ENCODE measurements at regions of chr10 and their contacts with region 1.

Region 1: GRCh38 chr10:124647421-124648130 is 96.6 kb downstream of the FAM53B start:
- DNase-seq: no peak
- H3K4me3 ChIP-seq: no peak overlapping the region
- H3K27ac ChIP-seq: peak overlapping the region; percentile 39 to 76 (median 72)
- H3K4me1 ChIP-seq: peaks cover 72 to 97% (median 91%) of the 10 kb centered on the region in 4 donors
- H3K27me3 ChIP-seq: no peaks in the 10 kb centered on the region
- CTCF ChIP-seq: peak in 2 of 3 experiments; percentile 5 to 26
- EP300 ChIP-seq: no peak
- POLR2A ChIP-seq: no peak

Region 2: DNA sequence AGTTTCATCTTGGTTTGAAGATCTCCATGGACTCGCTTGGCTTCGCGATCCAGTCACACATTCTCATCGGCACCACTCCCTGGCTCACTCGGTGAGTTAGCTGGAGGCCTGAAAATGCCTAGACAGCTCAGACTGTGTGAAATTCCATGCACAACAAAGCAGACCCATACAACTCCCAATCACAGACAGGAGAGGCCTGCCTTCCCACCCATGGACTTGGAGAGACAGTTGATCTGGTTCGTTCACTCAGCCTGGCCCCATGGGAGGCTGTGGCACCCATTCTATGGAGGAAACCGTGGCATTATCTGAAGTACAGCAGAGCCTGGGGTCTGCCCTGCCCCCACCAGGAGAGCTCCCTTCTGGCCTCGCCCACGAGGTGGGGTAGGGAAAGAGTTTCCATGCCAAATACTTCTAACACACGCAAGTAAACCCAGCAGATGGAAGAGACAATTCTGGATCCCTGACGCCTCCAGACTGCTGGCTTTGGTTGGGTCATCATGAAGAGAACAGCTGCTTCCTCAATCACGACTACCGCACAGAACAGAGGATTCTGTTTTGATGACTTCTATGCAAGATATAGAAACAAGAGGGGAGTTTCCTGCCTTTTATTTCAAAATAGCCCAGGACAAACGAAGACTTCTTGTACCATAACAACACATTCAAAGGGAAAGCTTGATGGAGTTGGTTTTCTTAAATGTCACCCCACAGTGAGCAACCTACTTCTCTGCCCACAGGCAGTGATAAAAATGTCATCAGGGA is 80.7 kb after region 1 on chr10:
- intact Hi-C with region 1: loop called (anchors 5 kb)
- DNase-seq: no peak
- H3K4me3 ChIP-seq: no peak overlapping the region
- H3K27ac ChIP-seq: peak overlapping the region; percentile 38 to 67 (median 54)
- H3K4me1 ChIP-seq: peaks cover 87 to 98% (median 91%) of the 10 kb centered on the region in 4 donors
- H3K27me3 ChIP-seq: no peaks in the 10 kb centered on the region
- CTCF ChIP-seq: no peak
- EP300 ChIP-seq: peak; percentile 1
- POLR2A ChIP-seq: no peak